ENCODE measurements at regions of chr15 and their contacts with region 1.

Region 1: GRCh38 chr15:48861813-48862431 is 16.0 kb upstream of the EID1 start:
- DNase-seq: peak; percentile 68
- ATAC-seq: peak; percentile 29; the same call in 1 of the 2 replicates
- H3K4me3 ChIP-seq: no peak overlapping the region
- H3K27ac ChIP-seq: peak overlapping the region; percentile 58
- H3K4me1 ChIP-seq: peaks cover 40% of the 10 kb centered on the region
- H3K27me3 ChIP-seq: no peaks in the 10 kb centered on the region
- CTCF ChIP-seq: peak; percentile 88

Region 2: GRCh38 chr15:48717458-48717857 is 144.5 kb before region 1 on chr15:
- CTCF ChIA-PET with region 1: interaction called, 3 read pairs
- POLR2A ChIA-PET with region 1: no interaction called
- intact Hi-C with region 1: loop called (anchors 2 kb)
- DNase-seq: peak; percentile 44
- ATAC-seq: peak; percentile 73
- H3K4me3 ChIP-seq: no peak overlapping the region
- H3K27ac ChIP-seq: no peak overlapping the region
- H3K4me1 ChIP-seq: peaks cover 11% of the 10 kb centered on the region
- H3K27me3 ChIP-seq: no peaks in the 10 kb centered on the region
- CTCF ChIP-seq: peak; percentile 53

Region 3: DNA sequence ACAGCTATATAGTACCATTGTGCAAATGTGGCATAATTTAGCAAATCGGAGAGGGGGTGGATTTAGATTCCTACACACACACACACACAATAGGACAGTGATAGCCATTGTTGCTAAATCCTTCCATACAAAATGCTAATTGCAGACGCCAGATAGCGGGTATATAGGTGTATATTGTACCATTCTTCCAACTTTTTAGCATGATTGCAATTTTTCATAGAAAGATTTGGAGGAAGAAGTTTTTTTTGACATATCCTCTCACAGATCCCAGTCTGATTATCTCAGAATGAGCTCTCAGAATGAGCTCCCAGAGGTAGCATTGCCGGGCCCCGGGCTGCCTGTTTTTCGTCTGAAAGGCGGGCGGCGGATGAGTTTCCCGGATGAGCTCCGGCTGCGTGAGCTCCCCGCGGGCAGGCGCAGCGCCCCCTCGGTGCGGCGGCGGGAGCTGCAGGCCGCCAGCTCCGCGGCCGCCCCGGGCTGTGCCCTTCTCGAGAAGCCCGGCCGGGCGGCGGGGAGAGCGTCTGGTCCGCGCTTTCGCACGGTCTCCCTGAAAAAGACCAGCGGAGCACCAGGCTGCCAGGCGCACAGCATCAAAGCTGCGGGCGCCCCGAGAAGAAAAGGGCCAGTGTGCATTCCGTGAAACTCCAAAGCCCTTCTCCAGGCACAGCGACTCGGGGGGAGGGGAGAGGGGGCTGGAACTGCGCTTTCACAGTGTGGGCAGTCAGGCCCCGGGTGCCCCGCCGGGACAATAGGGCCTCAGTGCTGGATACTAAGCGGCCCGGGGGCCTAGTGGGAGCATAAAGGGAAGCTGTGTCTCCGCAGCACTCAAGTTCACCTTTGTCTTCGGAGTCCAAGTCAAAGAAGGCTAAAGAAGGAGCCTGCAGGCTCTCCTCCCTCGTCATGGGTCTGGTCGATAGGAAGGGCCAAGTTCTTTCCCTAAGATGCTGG is 113.8 kb after region 1 on chr15:
- CTCF ChIA-PET with region 1: interaction called, 17 read pairs
- POLR2A ChIA-PET with region 1: no interaction called
- intact Hi-C with region 1: no loop called
- DNase-seq: peak; percentile 84
- ATAC-seq: peak; percentile 97
- H3K4me3 ChIP-seq: peak overlapping the region; percentile 70
- H3K27ac ChIP-seq: 0 out of 2 replicates have a peak overlapping the region, but pooled peaks have one; percentile 11
- H3K4me1 ChIP-seq: peaks cover 5% of the 10 kb centered on the region; the same call in 1 of the 2 replicates
- H3K27me3 ChIP-seq: no peaks in the 10 kb centered on the region
- CTCF ChIP-seq: peak; percentile 77

Region 4: DNA sequence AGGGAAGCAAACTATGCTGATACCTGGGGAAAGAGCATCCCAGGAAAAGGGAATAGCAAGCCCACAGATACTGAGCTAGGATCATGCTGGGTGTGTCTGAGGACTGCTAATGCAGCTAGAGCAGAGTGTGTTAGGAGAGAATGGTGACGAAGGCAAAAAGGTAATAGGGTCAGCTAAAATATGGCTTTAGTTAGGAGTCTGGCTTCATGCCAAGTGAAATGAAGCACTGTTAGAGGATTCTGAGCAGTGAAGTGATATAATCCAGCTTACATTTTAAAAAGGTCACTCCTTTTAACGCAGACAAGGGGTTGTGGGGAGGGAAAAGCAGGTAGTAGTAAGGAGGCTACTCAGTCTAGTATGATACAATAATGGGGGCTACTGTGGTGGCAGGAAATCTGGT is 154.0 kb after region 1 on chr15:
- CTCF ChIA-PET with region 1: no interaction called
- POLR2A ChIA-PET with region 1: no interaction called
- intact Hi-C with region 1: no loop called
- DNase-seq: no peak
- ATAC-seq: no peak
- H3K4me3 ChIP-seq: no peak overlapping the region
- H3K27ac ChIP-seq: no peak overlapping the region
- H3K4me1 ChIP-seq: no peaks in the 10 kb centered on the region
- H3K27me3 ChIP-seq: no peaks in the 10 kb centered on the region
- CTCF ChIP-seq: no peak

Region 5: DNA sequence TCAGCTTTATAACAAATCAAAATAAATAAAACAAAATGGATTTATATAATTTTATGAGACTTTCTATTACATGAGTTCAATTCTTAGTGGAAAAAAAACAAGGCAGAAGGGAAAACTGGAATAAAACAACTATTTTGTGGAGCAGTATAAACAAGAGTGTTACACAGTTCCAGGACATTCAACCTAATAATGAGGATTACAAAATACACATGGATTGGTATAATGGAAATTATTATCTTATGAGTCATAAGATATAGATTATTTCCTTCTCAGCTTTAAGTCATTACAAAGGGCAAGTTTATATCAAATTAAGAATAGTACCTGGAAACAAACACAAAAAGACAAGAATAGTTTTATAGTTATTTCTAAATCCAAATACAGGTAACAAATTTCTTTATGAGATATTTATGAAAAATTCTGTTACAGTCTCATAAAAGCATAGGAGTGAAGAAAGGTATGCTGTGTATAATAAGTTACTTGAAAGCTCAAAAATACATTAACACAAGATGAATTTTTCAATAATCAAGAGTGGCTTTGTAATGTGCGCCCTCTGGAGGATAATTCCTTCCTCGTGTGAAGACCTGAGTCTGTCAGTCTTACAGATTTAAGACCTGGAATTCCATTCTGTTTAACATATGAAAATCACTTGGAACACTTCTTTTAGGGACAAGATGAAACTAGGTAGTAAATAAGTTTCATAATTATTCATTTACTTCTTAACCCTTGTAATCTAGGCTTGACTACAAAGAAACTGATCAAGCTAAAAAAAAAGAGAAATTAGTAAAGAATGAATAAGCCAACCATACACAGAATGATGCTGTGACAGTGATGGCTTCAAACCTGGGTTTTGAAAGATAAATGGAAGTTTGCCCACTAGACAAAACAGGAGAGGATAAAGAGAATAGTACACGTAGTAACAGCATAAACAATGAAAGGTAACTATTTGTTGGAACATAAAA is 284.0 kb after region 1 on chr15:
- CTCF ChIA-PET with region 1: interaction called, 3 read pairs
- POLR2A ChIA-PET with region 1: no interaction called
- intact Hi-C with region 1: loop called (anchors 1 kb)
- DNase-seq: peak; percentile 73
- ATAC-seq: peak; percentile 57
- H3K4me3 ChIP-seq: no peak overlapping the region
- H3K27ac ChIP-seq: no peak overlapping the region
- H3K4me1 ChIP-seq: peaks cover 6% of the 10 kb centered on the region
- H3K27me3 ChIP-seq: no peaks in the 10 kb centered on the region
- CTCF ChIP-seq: peak; percentile 83

Region 6: GRCh38 chr15:50145451-50145872 is 1283.5 kb after region 1 on chr15:
- CTCF ChIA-PET with region 1: no interaction called
- POLR2A ChIA-PET with region 1: no interaction called
- intact Hi-C with region 1: loop called (anchors 5 kb)
- DNase-seq: peak; percentile 90
- ATAC-seq: peak; percentile 89
- H3K4me3 ChIP-seq: no peak overlapping the region
- H3K27ac ChIP-seq: no peak overlapping the region
- H3K4me1 ChIP-seq: peaks cover 21% of the 10 kb centered on the region; the same call in 1 of the 2 replicates
- H3K27me3 ChIP-seq: no peaks in the 10 kb centered on the region
- CTCF ChIP-seq: peak; percentile 69